ENCODE measurements at regions of chr2 and their contacts with region 1.

Region 1: DNA sequence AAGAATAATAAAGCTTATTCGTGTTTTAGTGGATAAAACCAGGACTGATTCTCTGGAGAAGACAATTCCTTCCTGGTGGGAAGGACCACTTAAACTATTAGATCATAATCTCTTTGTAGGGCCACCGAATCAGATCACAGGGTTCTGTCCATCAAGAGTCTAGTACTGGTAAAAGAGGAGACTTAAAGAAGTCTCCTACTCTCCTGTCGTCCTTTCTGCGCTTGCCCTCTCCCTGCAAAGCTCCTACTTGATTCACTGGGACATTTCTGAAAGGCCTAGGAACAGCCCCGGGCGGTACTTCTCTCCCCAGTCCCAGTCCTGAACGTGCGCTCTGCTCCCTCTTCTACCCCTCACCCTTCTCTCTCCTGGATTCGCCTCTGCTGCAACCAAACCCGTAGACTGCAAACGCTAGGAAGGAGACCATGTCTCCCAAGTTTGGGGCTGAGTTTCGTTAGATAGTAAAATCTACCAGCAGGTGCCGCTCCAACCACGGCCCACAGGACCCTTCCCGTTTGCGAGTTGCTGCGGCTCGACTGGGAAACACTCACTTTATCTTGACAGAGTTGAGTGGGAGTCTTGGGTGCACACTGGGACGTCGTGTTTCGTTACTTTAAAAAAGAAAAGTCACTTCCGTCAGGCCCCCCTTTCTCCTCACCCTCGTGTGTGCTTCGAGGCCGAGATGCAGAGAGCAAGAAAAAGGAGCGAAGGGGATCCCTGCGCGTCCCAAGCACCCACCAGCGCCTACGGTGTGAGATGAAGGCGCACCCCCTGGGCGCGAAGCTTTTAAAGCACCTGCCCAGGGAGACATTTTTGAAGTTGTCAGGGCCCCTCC is 923 bp downstream of the FIGLA start:
- DNase-seq: peak; percentile 87
- ATAC-seq: peak; percentile 80
- H3K4me3 Mint-ChIP-seq: peak overlapping the region; percentile 61
- H3K27ac Mint-ChIP-seq: no peak overlapping the region
- H3K4me1 Mint-ChIP-seq: peaks cover 14% of the 10 kb centered on the region
- H3K27me3 Mint-ChIP-seq: peaks cover 50% of the 10 kb centered on the region
- CTCF ChIP-seq: peak; percentile 83

Region 2: GRCh38 chr2:70498054-70498453 is 291.5 kb before region 1 on chr2:
- CTCF ChIA-PET with region 1: no interaction called
- POLR2A ChIA-PET with region 1: no interaction called
- intact Hi-C with region 1: no loop called
- DNase-seq: no peak
- ATAC-seq: peak; percentile 53
- H3K4me3 Mint-ChIP-seq: no peak overlapping the region
- H3K27ac Mint-ChIP-seq: no peak overlapping the region
- H3K4me1 Mint-ChIP-seq: no peaks in the 10 kb centered on the region
- H3K27me3 Mint-ChIP-seq: no peaks in the 10 kb centered on the region
- CTCF ChIP-seq: peak; percentile 13

Region 3: DNA sequence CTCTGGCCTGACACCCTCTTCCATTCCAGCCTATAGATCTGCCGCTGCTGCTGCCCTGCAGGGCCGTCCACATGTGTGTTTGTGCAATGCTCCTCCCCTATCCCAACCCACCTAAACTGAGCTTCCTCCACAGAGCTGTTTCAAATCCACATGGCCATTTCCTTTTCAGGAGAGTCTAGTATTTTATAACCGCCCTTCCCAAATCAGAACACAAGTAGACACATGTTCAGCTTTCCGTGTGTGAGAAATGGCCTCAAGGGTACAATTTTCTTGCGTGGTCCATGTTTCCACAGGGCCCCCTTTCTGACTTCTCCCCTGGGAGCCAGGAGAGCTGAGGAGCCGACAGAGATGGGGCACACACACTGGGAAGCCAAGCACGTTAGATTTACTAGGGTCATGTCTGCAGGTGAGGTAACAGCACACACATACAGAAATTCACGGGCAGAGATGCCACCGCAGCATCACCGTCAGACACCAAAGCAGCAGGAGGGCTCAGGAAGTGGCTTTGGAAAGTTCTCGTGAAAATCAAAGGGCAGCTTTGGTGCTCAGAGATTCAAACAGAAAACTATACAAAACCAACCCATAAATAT is 133.0 kb before region 1 on chr2:
- CTCF ChIA-PET with region 1: interaction called, 45 read pairs
- POLR2A ChIA-PET with region 1: no interaction called
- intact Hi-C with region 1: loop called (anchors 2 kb)
- DNase-seq: peak; percentile 70
- ATAC-seq: peak; percentile 67
- H3K4me3 Mint-ChIP-seq: peak overlapping the region; percentile 27
- H3K27ac Mint-ChIP-seq: peak overlapping the region; percentile 61
- H3K4me1 Mint-ChIP-seq: peaks cover 34% of the 10 kb centered on the region
- H3K27me3 Mint-ChIP-seq: peaks cover 6% of the 10 kb centered on the region
- CTCF ChIP-seq: no peak

Region 4: DNA sequence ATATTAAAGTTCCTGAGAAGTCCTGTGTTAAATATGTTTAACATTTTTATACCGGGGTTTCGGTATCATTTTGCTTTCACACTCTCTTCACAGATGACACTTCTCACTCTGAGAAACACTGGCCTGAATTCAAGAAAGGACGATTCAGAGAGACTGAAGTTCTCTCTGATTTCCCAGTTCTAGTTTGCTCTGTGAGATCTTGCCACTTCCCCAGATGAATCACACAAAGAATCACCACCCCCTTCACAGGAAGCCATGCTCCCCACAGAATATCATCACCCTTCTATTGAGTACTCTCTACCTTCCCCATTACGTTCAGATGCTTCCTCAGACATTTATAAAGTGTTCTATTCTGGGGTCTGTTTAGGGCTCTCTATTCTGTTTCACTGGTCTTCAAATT is 62.2 kb after region 1 on chr2:
- CTCF ChIA-PET with region 1: interaction called, 11 read pairs
- POLR2A ChIA-PET with region 1: no interaction called
- intact Hi-C with region 1: loop called (anchors 5 kb)
- DNase-seq: peak; percentile 70
- ATAC-seq: peak; percentile 98
- H3K4me3 Mint-ChIP-seq: peak overlapping the region; percentile 5
- H3K27ac Mint-ChIP-seq: peak overlapping the region; percentile 77
- H3K4me1 Mint-ChIP-seq: peaks cover 30% of the 10 kb centered on the region
- H3K27me3 Mint-ChIP-seq: no peaks in the 10 kb centered on the region
- CTCF ChIP-seq: no peak

Region 5: GRCh38 chr2:70919672-70920366 is 130.3 kb after region 1 on chr2:
- CTCF ChIA-PET with region 1: interaction called, 61 read pairs
- POLR2A ChIA-PET with region 1: interaction called, 3 read pairs
- intact Hi-C with region 1: loop called (anchors 5 kb)
- DNase-seq: peak; percentile 84
- ATAC-seq: peak; percentile 90
- H3K4me3 Mint-ChIP-seq: no peak overlapping the region
- H3K27ac Mint-ChIP-seq: no peak overlapping the region
- H3K4me1 Mint-ChIP-seq: no peaks in the 10 kb centered on the region
- H3K27me3 Mint-ChIP-seq: peaks cover 17% of the 10 kb centered on the region
- CTCF ChIP-seq: peak; percentile 90

Region 6: DNA sequence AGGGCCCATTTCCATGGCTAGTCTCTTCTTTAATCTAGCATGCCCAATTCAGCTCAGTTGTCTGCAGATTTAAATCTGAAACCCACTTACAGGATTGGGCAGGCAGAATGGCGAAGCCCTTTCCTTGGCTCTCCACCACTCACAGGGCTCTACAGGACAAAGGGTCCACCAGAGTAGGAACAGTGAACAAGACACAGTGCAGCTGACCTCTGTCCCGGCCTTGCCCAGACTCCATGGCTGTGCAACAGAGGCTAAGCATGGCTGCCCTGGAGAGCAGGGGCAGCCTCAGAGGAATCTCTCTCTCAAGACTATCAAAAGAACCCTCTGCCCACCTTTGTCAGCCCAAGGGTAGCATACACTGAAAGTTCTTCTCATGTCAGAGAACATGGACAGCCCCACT is 136.5 kb after region 1 on chr2:
- CTCF ChIA-PET with region 1: interaction called, 61 read pairs
- POLR2A ChIA-PET with region 1: no interaction called
- intact Hi-C with region 1: loop called (anchors 5 kb)
- DNase-seq: no peak
- ATAC-seq: no peak
- H3K4me3 Mint-ChIP-seq: no peak overlapping the region
- H3K27ac Mint-ChIP-seq: no peak overlapping the region
- H3K4me1 Mint-ChIP-seq: no peaks in the 10 kb centered on the region
- H3K27me3 Mint-ChIP-seq: no peaks in the 10 kb centered on the region
- CTCF ChIP-seq: no peak

Measured in activated CD8-positive, alpha-beta T cell treated with anti-CD3 and anti-CD28 coated beads for 36 hours (primary cell).